AG04449 (cell line): ENCODE measurements at regions of chr7 and their contacts with region 1.

Region 1: GRCh38 chr7:30412810-30413504 is 65.6 kb downstream of the NOD1 start:
- DNase-seq: peak; percentile 50
- H3K4me3 ChIP-seq: no peak overlapping the region
- CTCF ChIP-seq: peak; percentile 50

Region 2: GRCh38 chr7:30164567-30164966 is 248.4 kb before region 1 on chr7:
- CTCF ChIA-PET with region 1: interaction called, 23 read pairs
- POLR2A ChIA-PET with region 1: no interaction called
- DNase-seq: no peak
- H3K4me3 ChIP-seq: no peak overlapping the region
- CTCF ChIP-seq: peak; percentile 47

Region 3: DNA sequence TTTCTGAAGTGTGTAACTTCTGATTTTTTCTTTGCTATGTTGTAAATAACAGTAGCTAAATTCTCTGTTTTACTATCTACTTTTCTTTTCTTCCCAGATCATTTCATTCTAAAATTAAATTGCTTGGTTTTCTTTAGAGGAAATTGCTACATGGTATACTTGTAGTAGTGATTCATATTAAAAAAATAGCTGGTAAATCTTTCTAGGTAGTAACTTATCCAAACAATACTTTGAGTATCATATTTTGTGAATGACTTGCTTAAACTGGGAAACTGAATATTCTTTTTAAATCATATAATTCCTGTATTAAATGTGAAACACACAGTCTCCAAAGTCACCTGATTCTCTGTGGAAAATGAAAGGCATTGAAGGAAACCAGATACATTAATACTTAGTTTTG is 43.1 kb before region 1 on chr7:
- CTCF ChIA-PET with region 1: no interaction called
- POLR2A ChIA-PET with region 1: no interaction called
- DNase-seq: no peak
- H3K4me3 ChIP-seq: no peak overlapping the region
- CTCF ChIP-seq: no peak

Region 4: GRCh38 chr7:30430276-30430675 is 17.3 kb after region 1 on chr7:
- CTCF ChIA-PET with region 1: interaction called, 10 read pairs
- POLR2A ChIA-PET with region 1: no interaction called
- DNase-seq: no peak
- H3K4me3 ChIP-seq: no peak overlapping the region
- CTCF ChIP-seq: no peak

Region 5: DNA sequence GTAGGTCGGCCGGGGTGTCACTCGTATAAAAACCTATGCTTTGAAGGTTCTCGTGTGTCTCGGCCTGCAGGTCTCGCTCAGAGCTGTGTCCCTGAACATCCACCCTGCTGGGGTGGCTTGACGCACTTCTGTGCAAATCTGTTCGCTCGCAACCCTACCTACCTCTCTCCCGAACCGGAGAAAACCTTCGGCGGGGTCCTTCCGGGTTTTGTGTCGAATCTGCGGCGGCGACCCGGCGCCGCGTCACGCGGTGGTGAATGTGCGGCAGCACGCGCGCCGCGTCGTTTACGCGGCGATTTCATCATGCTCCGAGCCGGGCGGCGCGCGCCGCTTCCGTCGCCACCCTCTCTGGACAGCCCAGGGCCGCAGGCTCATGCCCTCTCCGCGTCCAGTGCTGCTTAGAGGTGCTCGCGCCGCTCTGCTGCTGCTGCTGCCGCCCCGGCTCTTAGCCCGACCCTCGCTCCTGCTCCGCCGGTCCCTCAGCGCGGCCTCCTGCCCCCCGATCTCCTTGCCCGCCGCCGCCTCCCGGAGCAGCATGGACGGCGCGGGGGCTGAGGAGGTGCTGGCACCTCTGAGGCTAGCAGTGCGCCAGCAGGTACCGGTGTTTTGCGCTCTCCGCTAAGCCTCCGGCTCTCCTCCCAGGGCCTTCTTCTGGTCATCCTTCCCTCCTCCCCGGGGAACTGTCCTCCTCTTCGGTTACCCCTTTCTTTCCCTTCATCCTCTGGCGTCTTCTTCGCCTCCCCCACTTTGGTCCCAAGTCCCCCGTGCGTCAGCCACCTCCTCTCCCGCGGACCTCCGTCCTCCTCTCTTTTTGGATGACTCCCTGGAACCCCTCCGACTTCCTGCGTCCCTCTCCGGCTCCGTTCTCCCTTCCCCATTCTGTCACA is 181.8 kb after region 1 on chr7 and contains the start of gene GARS1:
- CTCF ChIA-PET with region 1: no interaction called
- POLR2A ChIA-PET with region 1: no interaction called
- DNase-seq: peak; percentile 33
- H3K4me3 ChIP-seq: peak within 1 kb of the TSS; percentile 96
- CTCF ChIP-seq: no peak